PC-3 (cell line): ENCODE measurements at regions of chr2 and their contacts with region 1.

Region 1: GRCh38 chr2:119264781-119265692 is 41.4 kb downstream of the STEAP3 start:
- DNase-seq: peak; percentile 62
- ATAC-seq: peak; percentile 98
- H3K4me3 ChIP-seq: no peak overlapping the region
- H3K27ac ChIP-seq: no peak overlapping the region
- H3K4me1 ChIP-seq: no peaks in the 10 kb centered on the region
- H3K27me3 ChIP-seq: no peaks in the 10 kb centered on the region
- CTCF ChIP-seq: peak; percentile 85

Region 2: DNA sequence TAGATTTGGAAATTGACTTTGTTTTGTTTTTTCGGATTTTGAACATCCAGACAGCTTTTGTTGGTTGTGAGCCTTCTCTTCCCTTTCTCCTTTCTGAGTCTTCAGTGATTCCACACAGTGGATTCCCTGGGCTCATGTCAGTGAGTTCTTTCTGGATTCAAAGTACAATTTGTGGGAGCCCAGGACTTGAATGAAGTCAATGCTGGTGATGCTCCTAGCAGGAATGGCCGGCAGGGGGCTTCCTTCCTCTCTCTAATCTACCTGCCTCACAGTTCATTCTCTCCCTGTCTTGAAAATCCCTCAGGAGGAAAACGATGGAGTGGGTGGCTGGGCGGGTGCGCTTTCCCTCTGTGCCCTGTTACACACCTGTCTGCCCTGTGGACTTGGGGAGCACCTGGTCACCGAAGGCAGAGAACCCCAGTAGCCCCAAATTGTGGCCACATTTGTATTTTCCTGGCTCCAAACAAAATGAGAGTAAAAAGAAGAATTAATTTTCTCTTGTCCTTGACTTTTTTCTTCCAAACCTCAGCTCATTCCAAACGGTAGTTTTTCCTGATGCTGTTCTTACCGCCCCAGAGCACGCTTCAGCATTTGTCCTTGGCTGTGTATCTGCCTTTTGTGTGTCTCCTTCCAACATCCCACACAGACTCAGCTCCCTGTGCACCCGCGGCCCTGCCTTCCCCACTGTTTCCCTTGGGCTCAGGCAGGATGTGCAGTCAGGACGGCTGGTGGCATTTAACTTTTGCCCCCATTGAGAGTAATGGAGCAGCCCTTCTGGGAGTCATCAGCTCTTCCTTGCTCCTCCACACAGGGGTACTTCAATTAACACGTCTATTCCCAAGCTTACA is 236.5 kb before region 1 on chr2:
- CTCF ChIA-PET with region 1: no interaction called
- POLR2A ChIA-PET with region 1: no interaction called
- intact Hi-C with region 1: loop called (anchors 1 kb)
- DNase-seq: peak; percentile 63
- ATAC-seq: peak; percentile 74
- H3K4me3 ChIP-seq: no peak overlapping the region
- H3K27ac ChIP-seq: no peak overlapping the region
- H3K4me1 ChIP-seq: no peaks in the 10 kb centered on the region
- H3K27me3 ChIP-seq: peaks cover 34% of the 10 kb centered on the region
- CTCF ChIP-seq: peak; percentile 82

Region 3: DNA sequence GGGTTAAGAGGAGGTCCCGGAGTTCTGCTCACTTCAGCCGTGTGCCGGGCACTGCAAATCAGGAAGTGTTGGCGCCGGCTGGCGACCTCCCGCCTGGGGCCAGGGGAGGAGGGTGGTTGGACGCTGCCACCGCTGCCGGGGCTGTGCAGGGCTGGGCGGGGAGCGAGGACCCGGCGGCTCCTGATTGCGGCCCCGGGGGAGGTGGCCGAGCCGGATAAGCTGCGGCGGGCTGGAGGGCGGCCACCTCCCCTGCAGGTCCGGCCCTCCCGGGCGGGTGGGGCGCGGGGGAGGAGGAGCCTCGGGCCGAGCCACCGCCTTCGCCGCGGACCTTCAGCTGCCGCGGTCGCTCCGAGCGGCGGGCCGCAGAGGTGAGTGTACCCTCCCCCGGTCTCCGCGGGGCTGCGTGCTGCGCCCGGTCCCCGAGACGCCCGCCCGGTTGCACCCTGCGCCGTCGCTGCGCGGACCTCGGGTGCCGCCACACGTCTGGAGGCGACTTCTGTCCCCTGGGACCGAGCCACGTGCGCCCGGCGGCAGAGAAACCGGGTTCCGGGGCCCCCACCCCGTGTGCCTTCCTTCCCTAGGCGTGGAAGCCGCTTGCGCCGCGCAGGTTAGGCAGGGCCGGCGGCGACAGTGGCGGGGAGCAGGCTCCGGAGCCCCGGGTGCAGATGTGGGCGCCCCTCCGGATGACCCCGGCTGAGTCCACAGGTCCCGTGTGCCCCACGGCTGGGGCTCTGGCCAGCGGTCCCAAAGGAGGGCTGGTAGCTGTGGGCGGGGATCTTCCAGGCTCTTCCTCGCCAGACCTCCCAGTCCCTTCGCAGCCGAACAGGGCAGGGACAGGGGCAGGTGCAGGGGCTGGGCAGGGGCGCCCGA is 41.3 kb before region 1 on chr2 and contains the start of gene STEAP3:
- CTCF ChIA-PET with region 1: no interaction called
- POLR2A ChIA-PET with region 1: interaction called, 4 read pairs
- intact Hi-C with region 1: loop called (anchors 5 kb)
- DNase-seq: peak; percentile 82
- ATAC-seq: peak; percentile 85
- H3K4me3 ChIP-seq: peak within 1 kb of the TSS; percentile 94
- H3K27ac ChIP-seq: no peak within 1 kb of the TSS
- H3K4me1 ChIP-seq: peaks cover 17% of the 10 kb centered on the region
- H3K27me3 ChIP-seq: no peaks in the 10 kb centered on the region
- CTCF ChIP-seq: no peak
- total RNA-seq, gene STEAP3: 24.6 and 27.3 TPM in 2 replicates